IMR-90 (cell line): ENCODE measurements at regions of chr3 and their contacts with region 1.

Region 1: DNA sequence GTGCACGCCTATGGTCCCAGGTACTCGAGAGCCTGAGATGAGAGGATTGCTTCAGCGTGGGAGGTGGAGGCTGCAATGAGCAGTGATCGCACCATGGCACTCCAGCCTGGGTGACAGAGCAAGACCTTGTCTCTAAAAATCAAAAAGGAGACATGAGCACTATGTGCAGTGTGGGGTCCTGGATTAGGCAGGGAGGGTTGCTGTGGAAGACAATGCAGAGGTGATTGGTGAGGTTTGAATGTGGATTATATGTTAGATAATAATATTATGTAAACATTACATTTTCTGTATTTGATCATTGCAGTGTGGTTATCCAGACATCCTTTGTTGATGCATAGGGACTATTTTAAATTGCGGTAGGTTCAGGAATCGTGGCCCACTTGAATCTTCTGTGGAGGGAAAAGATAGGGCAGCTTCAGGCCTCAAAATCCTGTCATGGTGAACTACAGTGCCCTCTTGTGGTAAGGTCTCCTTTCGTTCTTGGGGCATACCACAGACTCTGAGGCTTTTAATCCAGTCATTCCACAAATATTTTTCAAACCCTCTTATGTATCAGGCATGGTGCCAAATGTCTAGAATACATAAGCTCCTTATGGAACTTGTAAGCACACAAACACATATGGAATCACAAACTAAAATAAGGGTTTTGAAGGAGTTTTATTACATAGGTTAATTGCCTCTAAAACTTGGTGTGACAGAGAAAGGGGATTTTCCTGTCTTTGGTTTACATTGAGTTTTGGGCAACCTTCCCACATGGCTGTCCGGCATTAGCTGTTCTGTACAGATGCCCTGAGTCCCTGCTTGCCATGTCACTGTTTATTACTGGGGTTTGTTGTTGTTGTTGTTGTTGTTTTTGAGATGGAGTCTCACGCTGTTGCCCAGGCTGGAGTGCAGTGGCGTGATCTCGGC is 37.7 kb downstream of the GPD1L start:
- DNase-seq: peak; percentile 97
- ATAC-seq: peak; percentile 95
- H3K4me3 ChIP-seq: no peak overlapping the region
- H3K27ac ChIP-seq: no peak overlapping the region
- H3K4me1 ChIP-seq: peaks cover 10% of the 10 kb centered on the region
- H3K27me3 ChIP-seq: no peaks in the 10 kb centered on the region
- CTCF ChIP-seq: peak; percentile 83
- POLR2A ChIP-seq: no peak
- RAD21 ChIP-seq: peak; percentile 83

Region 2: GRCh38 chr3:31361371-31362273 is 782.5 kb before region 1 on chr3:
- CTCF ChIA-PET with region 1: no interaction called
- POLR2A ChIA-PET with region 1: no interaction called
- dilution Hi-C with region 1: no loop called
- in situ Hi-C with region 1: no loop called
- intact Hi-C with region 1: loop called (anchors 10 kb)
- DNase-seq: peak; percentile 86
- ATAC-seq: peak; percentile 74
- H3K4me3 ChIP-seq: peak overlapping the region; percentile 16; the same call in 1 of the 2 replicates
- H3K27ac ChIP-seq: peak overlapping the region; percentile 23; the same call in 1 of the 2 replicates
- H3K4me1 ChIP-seq: peaks cover 10% of the 10 kb centered on the region
- H3K27me3 ChIP-seq: no peaks in the 10 kb centered on the region
- CTCF ChIP-seq: no peak
- POLR2A ChIP-seq: no peak
- RAD21 ChIP-seq: no peak

Region 3: GRCh38 chr3:31559872-31560534 is 584.1 kb before region 1 on chr3:
- CTCF ChIA-PET with region 1: no interaction called
- POLR2A ChIA-PET with region 1: no interaction called
- dilution Hi-C with region 1: no loop called
- in situ Hi-C with region 1: no loop called
- intact Hi-C with region 1: loop called (anchors 2 kb)
- DNase-seq: no peak
- ATAC-seq: no peak
- H3K4me3 ChIP-seq: no peak overlapping the region
- H3K27ac ChIP-seq: no peak overlapping the region
- H3K4me1 ChIP-seq: no peaks in the 10 kb centered on the region; the same call in none of the 2 replicates
- H3K27me3 ChIP-seq: no peaks in the 10 kb centered on the region
- CTCF ChIP-seq: no peak
- POLR2A ChIP-seq: no peak
- RAD21 ChIP-seq: no peak

Region 4: DNA sequence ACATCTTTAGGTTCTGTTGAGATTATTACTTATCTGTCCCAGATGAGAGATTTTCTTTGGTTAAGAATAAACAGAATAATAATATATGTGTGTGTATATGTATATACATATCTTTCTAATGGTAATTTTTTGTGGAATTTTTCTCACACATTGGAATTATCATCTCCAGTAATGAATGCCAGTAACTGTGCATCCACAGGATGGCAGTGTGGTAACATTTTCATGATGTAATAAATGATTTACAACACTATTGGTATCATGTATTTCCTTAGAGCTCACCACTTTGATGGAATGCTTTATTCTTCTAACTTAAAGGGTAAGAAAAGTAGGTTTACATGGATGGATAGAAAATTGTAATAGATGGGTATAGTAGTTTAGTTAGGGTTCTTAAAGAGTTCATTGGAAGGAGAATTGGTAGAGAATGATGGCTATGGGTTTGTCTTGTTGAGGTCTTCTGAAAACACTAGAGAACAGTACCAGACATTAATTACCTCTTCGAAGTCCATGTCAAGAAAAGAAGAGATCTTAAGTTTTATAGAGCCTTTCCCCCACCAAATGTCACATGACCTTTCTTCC is 533.3 kb before region 1 on chr3:
- CTCF ChIA-PET with region 1: no interaction called
- POLR2A ChIA-PET with region 1: no interaction called
- dilution Hi-C with region 1: no loop called
- in situ Hi-C with region 1: loop called (anchors 25 kb)
- intact Hi-C with region 1: loop called (anchors 1 kb)
- DNase-seq: peak; percentile 66
- ATAC-seq: peak; percentile 55
- H3K4me3 ChIP-seq: no peak overlapping the region
- H3K27ac ChIP-seq: no peak overlapping the region
- H3K4me1 ChIP-seq: no peaks in the 10 kb centered on the region
- H3K27me3 ChIP-seq: no peaks in the 10 kb centered on the region
- CTCF ChIP-seq: peak; percentile 76
- POLR2A ChIP-seq: no peak
- RAD21 ChIP-seq: peak; percentile 71

Region 5: DNA sequence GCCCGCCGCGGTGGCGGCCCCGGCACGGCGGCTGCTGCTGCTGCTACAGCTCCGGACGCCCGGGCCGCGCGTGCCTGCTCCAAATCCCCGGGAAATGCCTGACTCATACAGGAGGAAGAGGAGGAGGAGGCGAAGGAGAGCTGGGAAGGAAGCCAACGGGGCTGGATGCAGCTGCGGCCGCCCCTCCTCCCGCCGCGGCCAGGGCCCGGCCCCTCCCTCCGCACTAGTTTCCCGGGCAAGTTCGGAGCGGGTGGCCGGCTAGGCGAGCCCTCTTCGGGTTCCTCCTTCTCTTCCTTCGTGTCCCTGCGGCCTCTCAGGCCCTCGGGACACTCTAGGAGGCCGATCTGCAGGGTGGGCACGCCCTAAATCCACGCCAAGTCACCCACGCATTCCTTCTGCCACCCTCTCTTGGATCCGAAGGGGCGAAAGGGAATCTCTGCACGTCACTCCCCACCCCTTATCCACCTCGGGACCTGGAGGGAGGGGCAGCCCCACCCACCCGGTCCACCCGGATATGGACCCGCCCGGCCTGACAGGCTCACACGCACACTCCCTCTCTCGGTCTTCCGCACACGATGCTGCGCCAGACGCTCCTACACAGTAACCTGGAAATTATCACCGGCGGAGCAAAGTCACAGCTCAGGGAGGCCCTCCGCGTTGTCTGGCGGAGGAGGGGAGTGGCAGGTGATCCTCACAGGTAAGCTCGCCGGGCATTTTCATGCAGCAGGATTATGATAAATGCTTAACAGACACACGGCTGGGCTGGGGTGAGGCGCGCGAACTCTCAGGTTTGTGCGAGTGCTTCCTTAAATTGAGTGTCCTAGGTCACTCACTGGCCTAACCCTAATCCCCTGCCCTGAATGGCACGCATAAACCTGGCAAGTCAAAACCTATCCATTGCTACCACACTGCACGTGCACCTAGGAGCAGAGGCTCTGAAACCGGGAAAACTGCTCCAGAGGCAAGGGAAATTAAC is 162.6 kb before region 1 on chr3 and contains the starts of genes OSBPL10 and ZNF860:
- CTCF ChIA-PET with region 1: no interaction called
- POLR2A ChIA-PET with region 1: no interaction called
- dilution Hi-C with region 1: no loop called
- in situ Hi-C with region 1: no loop called
- intact Hi-C with region 1: no loop called
- DNase-seq: peak; percentile 92
- ATAC-seq: peak; percentile 87
- H3K4me3 ChIP-seq: peak within 1 kb of the TSS; percentile 87
- H3K27ac ChIP-seq: peak within 1 kb of the TSS; percentile 63
- H3K4me1 ChIP-seq: no peaks in the 10 kb centered on the region; the same call in 1 of the 2 replicates
- H3K27me3 ChIP-seq: no peaks in the 10 kb centered on the region
- CTCF ChIP-seq: no peak
- POLR2A ChIP-seq: peak; percentile 59
- RAD21 ChIP-seq: no peak
- total RNA-seq, gene OSBPL10: 7.2 and 9.5 TPM in 2 replicates
- total RNA-seq, gene ZNF860: 0.18 and 0.56 TPM in 2 replicates

Region 6: DNA sequence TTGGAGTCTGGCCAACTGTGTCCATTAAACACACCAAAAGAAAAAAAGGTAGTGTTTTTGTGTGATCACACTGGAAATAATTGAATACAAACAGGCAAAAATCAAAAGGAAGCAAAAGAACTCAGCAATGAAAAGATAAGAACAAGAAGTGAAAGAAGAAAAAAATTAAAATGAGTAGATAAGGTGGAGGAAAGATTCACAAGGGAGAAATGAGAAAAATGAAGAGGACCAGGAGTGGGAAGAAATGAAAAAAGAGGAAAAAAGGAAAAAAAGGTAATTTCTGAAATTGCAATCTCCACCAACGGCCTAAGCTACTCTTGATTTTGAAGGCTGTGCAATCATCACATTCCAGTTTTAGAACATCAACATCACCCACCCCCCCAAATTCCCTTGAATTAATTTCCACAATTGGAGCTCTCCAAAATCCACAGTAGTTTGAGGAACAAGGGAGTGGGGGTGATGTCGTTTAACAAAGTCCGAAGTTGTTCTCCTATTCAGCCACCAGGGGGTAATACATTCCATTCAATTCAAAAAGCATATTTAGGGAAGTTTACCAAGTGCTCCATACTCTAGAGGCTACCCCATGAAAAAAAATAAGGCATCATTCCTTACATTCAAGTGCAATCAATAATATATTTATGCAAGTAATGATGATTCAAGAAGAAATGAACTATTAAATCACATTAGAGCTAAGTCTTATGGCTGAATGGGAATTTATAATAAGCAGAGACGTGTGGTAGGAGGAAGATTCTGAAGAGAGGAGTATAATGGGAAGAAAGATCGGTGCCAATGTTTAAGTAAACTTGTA is 125.1 kb before region 1 on chr3:
- CTCF ChIA-PET with region 1: interaction called, 21 read pairs
- POLR2A ChIA-PET with region 1: no interaction called
- dilution Hi-C with region 1: no loop called
- in situ Hi-C with region 1: no loop called
- intact Hi-C with region 1: loop called (anchors 1 kb)
- DNase-seq: peak; percentile 57
- ATAC-seq: peak; percentile 88
- H3K4me3 ChIP-seq: no peak overlapping the region
- H3K27ac ChIP-seq: peak overlapping the region; percentile 21; the same call in 1 of the 2 replicates
- H3K4me1 ChIP-seq: peaks cover 5% of the 10 kb centered on the region; the same call in 1 of the 2 replicates
- H3K27me3 ChIP-seq: peaks cover 2% of the 10 kb centered on the region; the same call in 1 of the 2 replicates
- CTCF ChIP-seq: peak; percentile 66
- POLR2A ChIP-seq: no peak
- RAD21 ChIP-seq: peak; percentile 58